Common myeloid progenitor, CD34-positive (primary cell): ENCODE measurements at regions of chr12 and their contacts with region 1.

Region 1: DNA sequence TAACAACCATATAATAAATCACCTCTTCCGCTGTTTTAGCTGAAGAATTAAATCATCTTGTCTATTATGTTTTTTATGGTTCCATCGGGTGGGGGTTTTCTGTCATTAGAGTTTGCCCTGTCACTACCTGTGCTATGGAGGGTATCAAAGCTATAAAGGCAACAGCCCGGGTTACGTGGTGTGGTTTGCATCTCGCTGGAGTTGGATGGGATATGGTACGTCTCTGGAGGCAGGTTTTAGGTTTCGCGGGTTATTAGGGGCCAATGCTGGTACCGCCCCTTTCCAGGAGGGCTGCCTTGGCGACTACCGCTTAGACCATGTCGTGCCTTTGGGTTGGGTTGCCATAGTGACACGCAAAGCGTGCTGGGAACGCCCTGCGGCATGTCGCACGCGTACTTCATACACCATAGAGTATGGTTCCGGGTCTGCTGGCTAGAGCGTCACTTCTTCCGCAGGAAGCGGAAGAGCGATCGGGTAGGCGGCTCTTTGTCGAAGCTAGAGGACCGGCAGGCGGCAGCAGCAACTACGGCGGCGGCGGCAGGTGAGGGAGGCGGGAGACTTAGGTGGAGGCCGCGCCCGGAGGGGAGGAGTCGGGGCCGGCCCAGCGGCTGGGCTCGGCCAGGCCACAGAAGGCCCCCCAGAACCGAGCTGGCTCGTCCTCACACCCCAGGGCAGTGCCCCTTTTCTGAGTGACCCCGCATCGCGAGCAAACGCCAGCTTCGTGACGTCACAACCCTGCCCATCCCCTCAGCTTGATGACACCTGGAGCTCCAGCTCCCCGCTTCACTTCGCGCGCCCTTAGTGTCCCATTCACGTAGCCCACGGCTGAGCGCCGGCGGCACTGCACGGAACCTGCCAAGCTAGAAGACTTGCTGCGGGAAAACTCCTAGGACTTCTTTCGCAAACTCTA is at the start of gene ZC3H10:
- DNase-seq: peak; percentile 99 to 100 (median 100)
- H3K4me3 ChIP-seq: peak within 1 kb of the TSS; percentile 74 to 100 (median 91)
- H3K27ac ChIP-seq: peak within 1 kb of the TSS; percentile 86 to 94
- H3K4me1 ChIP-seq: peaks cover 13 to 34% (median 23%) of the 10 kb centered on the region in 4 experiments
- H3K27me3 ChIP-seq: no peaks in the 10 kb centered on the region

Region 2: DNA sequence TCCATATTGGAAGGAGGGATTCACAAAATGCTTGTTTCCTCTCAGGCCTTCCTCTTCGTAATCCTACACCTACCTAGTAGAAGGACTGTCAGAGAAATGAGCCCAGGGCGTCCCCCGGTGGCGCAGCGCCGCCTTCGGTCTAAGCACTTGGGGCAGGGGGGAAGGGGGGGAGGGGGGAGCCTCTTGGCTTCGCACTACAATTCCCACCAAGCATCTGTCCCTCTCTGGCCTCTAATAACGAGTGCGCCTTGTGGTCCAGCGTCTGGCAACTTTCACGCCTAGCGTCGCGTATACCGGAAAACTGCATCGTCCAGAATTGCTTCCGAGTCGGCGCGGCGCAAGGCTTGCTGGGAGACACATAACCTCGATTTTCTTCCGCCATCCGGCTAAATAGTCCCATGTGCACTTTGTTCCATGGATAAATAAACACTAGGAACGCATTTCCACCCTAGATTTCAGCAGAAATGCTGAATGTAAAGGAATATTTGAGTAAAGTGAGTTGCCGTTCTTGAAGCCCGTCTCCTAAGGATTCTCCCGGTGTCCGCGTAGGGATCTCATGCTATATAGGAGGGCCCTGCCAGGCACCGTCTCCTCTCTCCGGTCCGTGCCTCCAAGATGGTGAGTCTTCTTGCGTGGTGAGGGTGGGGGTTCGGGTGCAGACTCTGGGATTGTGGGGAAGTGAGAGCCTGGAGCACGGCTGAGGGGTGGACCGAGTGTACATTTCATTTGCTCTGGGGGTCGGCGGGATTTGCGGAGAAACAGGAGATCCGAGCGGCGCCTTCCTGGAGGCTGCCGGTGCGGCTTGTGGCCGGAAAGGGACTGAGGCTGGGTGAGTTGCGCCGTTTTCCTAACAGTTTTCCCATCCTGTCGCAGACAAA is 76.2 kb before region 1 on chr12 and contains the start of gene RPS26:
- CTCF ChIA-PET with region 1: interaction called, 32 read pairs
- POLR2A ChIA-PET with region 1: interaction called, 4 read pairs
- DNase-seq: peak; percentile 99 to 100 (median 100)
- H3K4me3 ChIP-seq: peak within 1 kb of the TSS; percentile 89 to 99 (median 97)
- H3K27ac ChIP-seq: peak within 1 kb of the TSS; percentile 92 to 97
- H3K4me1 ChIP-seq: peaks cover 6 to 24% (median 15%) of the 10 kb centered on the region in 4 experiments
- H3K27me3 ChIP-seq: no peaks in the 10 kb centered on the region

Region 3: DNA sequence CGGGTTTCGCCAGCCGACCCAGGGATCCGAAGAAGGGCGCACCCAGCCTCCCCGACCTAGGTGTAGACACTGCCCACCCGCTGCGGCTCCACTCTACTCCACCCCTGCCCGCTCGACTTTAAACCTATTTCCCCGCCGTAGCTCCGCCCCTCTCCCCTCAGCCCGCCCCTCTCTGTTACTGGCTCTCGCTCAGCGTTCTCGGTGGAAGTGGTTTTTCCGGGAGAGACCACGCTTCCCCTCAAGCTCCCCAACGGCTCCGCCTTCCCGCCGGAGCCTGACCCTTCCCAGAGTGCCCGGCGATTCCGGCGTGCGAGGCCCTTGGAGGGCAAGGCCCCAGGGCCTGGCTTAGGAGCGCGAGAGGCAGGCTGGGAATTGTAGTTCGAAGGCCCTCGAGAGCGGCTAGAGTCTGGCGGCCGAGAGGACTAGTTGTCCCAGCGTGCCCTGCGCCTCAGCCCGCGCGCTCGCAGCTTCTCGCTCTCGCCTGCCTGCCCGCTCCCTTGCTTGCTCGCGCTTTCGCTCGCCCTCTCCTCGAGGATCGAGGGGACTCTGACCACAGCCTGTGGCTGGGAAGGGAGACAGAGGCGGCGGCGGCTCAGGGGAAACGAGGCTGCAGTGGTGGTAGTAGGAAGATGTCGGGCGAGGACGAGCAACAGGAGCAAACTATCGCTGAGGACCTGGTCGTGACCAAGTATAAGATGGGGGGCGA is 13.8 kb before region 1 on chr12 and contains the start of gene PA2G4:
- CTCF ChIA-PET with region 1: interaction called, 33 read pairs
- POLR2A ChIA-PET with region 1: interaction called, 35 read pairs
- DNase-seq: peak; percentile 99 to 100 (median 99)
- H3K4me3 ChIP-seq: peak within 1 kb of the TSS; percentile 75 to 97 (median 86)
- H3K27ac ChIP-seq: peak within 1 kb of the TSS; percentile 74 to 93
- H3K4me1 ChIP-seq: peaks cover 16 to 34% (median 27%) of the 10 kb centered on the region in 4 experiments
- H3K27me3 ChIP-seq: no peaks in the 10 kb centered on the region

Region 4: DNA sequence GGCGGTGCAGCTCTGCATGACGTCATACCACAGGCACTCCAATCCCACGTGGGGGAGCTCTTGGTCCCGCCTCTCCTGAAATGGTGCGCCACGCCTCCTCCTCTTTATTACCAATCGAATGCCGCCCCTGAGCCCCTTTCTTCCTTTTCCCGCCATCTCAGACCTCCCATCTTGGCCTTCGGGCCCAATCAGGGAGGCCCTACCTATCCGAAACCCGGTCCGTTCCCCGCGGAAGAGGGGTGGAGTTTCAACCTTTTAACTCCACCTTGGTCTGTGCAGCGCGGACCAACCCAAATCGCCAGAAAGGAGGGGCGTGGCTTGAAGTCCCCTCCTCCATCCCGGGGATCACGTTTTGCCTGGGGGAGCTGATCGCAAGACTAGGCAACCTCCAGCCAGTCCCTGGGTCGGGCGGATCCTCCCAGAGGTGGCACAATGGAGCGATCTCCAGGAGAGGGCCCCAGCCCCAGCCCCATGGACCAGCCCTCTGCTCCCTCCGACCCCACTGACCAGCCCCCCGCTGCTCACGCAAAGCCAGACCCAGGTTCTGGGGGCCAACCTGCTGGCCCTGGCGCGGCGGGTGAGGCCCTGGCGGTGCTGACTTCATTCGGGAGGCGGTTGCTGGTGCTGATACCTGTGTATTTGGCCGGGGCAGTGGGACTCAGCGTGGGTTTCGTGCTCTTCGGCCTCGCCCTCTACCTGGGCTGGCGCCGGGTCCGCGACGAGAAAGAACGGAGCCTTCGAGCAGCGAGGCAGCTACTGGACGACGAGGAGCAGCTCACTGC is 10.0 kb after region 1 on chr12 and contains the start of gene ESYT1:
- CTCF ChIA-PET with region 1: interaction called, 37 read pairs
- POLR2A ChIA-PET with region 1: interaction called, 11 read pairs
- DNase-seq: peak; percentile 100
- H3K4me3 ChIP-seq: peak within 1 kb of the TSS; percentile 83 to 97 (median 90)
- H3K27ac ChIP-seq: peak within 1 kb of the TSS; percentile 78 to 91
- H3K4me1 ChIP-seq: peaks cover 26 to 68% (median 64%) of the 10 kb centered on the region in 4 experiments
- H3K27me3 ChIP-seq: no peaks in the 10 kb centered on the region

Region 5: DNA sequence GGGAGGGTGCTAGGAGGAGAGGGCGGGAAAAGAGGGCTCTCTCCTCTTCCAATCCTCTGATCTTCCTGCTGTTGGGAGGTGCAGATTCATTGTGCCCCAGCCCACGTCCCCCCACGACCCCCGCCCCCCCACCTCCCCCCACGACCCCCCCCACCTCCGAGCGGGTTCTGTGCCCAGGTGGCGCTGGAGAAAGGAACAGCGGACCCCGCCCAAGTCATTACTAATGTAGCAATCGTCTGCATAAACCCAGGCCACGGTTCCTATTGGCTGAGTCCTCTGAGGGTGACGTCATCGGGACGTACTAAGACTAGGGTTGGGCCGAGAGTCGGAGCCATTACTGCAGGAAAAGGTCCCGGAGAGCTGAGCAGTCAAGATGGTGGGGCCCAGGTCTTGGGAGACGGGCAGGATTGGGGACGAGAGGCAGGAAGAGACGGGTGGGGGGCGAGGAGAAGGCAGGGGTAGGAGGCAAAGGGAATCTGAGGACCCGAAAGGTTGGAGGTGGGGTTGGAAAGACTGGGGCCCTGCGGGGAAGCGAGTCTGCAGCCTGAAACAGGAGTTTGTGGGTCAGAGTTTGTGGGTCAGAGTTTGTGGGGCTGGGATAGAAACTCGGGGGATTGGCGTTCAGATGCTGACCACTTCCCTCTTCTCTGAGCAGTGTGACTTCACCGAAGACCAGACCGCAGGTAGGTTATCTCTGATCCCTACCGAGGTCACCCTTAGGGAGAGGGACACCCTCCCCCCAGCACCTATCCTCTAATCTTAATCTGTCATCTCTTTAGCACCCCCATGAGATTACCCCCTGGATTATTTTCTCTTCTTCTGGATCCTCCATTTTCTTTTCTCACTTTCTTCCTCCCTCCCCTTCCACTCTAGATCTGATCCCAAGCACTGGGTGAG is 40.2 kb after region 1 on chr12 and contains the start of gene MYL6:
- CTCF ChIA-PET with region 1: interaction called, 17 read pairs
- POLR2A ChIA-PET with region 1: interaction called, 7 read pairs
- DNase-seq: peak; percentile 97 to 98 (median 98)
- H3K4me3 ChIP-seq: peak within 1 kb of the TSS; percentile 71 to 99 (median 97)
- H3K27ac ChIP-seq: peak within 1 kb of the TSS; percentile 94 to 98
- H3K4me1 ChIP-seq: peaks cover 10 to 42% (median 37%) of the 10 kb centered on the region in 4 experiments
- H3K27me3 ChIP-seq: no peaks in the 10 kb centered on the region

Region 6: GRCh38 chr12:56165369-56165768 is 47.3 kb after region 1 on chr12:
- CTCF ChIA-PET with region 1: interaction called, 17 read pairs
- POLR2A ChIA-PET with region 1: interaction called, 3 read pairs
- DNase-seq: no peak
- H3K4me3 ChIP-seq: no peak overlapping the region
- H3K27ac ChIP-seq: no peak overlapping the region
- H3K4me1 ChIP-seq: peaks cover 0 to 8% (median 6%) of the 10 kb centered on the region in 4 experiments
- H3K27me3 ChIP-seq: no peaks in the 10 kb centered on the region

Region 7: GRCh38 chr12:56224102-56224701 is 106.2 kb after region 1 on chr12 and contains the start of gene NABP2:
- CTCF ChIA-PET with region 1: interaction called, 39 read pairs
- POLR2A ChIA-PET with region 1: interaction called, 6 read pairs
- DNase-seq: peak; percentile 96
- H3K4me3 ChIP-seq: peak within 1 kb of the TSS; percentile 37 to 89 (median 83)
- H3K27ac ChIP-seq: peak within 1 kb of the TSS in 1 of 2 experiments; percentile 83
- H3K4me1 ChIP-seq: peaks cover 9 to 49% (median 42%) of the 10 kb centered on the region in 4 experiments
- H3K27me3 ChIP-seq: no peaks in the 10 kb centered on the region